Activated T-helper 1 cell treated with anti-CD3 and anti-CD28 coated beads, Interleukin-12 subunit alpha, Interleukin-12 subunit beta, Interleukin-2, Interleukin-4 antibody, amounts not matched to agents 30 ng/mL and 10 ng/mL and 1 ng/mL, durations not matched to agents 14 hours and 24 hours and 36 hours (primary cell): ENCODE measurements at regions of chr5 and their contacts with region 1.

Region 1: DNA sequence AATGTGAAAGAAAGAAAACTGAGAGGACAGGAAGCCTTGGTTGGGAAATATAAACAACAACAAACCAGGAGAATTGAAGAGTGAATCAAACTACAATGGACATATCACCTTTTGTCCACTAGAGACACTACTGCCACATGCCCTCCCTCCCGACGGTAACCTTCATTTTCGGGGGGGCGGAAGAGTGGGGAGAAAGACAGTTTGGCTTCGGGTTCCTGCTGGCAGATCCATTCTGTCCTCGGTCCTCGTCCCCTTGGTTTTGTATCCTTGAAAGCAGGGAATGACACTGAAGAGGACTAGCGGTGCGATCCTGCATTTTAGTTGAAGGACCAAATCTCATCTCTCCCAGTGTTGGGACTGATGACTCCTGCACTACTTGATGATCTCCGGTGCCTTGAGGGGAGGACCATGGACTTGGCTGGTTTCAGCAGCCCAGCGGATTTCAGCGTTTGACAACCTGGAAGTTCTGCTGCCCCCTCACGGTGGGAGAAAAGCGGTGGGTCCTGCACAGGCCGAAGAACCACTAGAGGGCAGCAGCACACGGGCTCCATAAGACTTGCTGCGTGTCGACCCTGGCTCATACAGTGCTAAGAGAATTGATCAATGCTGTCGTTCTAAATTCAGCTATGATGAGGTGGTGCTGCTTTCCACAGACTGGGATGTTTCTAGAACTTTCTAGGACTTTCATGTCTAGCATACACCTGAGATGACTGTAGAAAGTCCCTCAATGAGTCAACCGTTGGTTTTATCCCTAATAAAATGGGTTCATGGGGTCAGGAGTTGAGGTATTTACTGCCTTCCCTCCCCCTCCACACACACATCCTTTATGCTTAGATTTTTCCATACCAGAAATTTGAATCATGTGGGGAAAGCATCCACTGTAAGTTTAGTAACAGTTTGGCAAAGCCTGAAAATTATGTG is 15.1 kb upstream of the ZNF131 start:
- DNase-seq: peak; percentile 83
- H3K4me3 Mint-ChIP-seq: peak overlapping the region; percentile 86
- H3K27ac Mint-ChIP-seq: peak overlapping the region; percentile 89
- H3K4me1 Mint-ChIP-seq: peaks cover 41% of the 10 kb centered on the region
- H3K27me3 Mint-ChIP-seq: no peaks in the 10 kb centered on the region

Region 2: DNA sequence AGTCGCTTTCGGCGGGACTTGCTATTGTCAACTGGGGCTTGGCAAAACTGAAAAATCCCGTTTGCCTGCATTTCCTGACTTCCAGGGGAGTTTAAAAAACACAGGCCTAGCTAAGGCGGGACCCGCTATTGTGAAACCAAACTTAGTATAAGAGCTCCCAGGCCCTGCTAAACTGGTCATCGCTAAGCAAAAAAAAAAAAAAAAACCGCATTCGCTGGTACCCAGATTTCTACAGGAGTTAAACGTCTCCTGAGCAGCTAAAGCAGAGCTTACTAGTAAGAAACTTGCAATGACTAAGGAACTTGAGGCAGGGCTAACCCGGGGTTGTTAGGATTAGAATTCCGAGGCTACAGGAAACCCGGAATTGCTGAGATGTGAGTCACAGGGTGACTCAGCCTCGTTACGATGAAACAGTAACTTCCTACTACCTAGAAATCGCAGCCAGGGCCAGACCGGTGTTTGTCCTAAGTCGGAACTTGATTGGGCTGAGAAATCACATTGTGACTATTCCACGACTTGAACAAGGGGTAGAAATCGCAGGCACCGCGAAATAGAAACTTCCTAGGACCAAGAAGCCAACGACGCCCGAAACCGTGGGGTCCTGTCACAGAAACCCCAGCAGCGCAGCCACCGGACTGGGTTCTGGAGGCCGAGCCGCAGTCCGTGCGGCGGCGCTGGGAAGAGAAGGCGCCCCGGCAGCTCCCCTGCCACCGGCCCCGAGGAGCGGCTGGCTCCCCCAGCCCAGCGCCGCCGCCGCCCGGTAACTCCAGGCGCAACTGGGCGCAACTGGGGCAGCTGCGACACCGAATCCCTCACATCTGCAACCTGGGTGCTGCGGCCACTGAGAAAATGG is 155.0 kb before region 1 on chr5:
- intact Hi-C with region 1: loop called (anchors 2 kb)
- DNase-seq: peak; percentile 60
- H3K4me3 Mint-ChIP-seq: peak overlapping the region; percentile 88
- H3K27ac Mint-ChIP-seq: peak overlapping the region; percentile 97
- H3K4me1 Mint-ChIP-seq: peaks cover 37% of the 10 kb centered on the region
- H3K27me3 Mint-ChIP-seq: peaks cover 8% of the 10 kb centered on the region

Region 3: DNA sequence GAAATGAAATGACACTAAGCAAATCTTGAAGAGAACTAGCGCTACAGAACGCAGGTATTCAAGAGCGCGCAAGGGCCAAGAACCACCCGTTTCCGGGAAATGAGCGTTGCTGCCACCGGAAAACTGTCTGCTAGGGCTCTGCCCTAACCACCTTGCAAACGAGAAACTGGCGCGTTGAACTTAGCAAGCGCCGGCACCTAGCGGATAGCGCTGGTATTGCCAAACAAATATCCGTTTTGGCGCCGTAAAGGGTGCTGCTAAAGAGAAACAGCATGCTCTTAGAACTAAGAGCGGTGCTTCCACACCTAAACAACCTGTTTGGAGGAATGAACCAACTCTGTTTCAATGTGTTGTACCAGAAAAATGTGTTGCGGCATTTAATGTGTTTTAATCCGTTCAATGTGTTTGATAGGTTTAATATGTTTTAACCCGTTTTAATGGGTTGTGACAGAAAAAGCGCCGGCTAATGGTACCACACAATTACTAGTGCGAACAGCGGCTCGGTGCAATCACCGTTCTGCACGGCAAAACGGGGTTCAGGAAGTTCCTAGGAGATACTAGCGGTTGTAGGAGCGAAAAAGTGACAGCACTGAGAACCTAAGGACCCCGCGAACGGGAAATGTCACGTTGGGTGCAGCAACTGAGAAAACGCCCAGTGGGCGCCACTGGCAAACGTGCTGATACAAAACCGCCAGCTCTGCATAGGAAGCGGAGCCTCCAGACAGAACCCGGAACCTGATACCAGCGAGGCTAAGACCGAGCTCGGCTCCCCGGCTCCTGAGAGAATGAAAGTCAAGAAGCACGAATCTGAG is 65.1 kb before region 1 on chr5 and contains the start of gene ANXA2R:
- intact Hi-C with region 1: loop called (anchors 1 kb)
- DNase-seq: peak; percentile 93
- H3K4me3 Mint-ChIP-seq: peak within 1 kb of the TSS; percentile 82
- H3K27ac Mint-ChIP-seq: peak within 1 kb of the TSS; percentile 86
- H3K4me1 Mint-ChIP-seq: peaks cover 59% of the 10 kb centered on the region
- H3K27me3 Mint-ChIP-seq: no peaks in the 10 kb centered on the region
- total RNA-seq, gene ANXA2R: 0.88 and 0.93 TPM in 2 replicates

Region 4: GRCh38 chr5:43191740-43192557 is 86.3 kb after region 1 on chr5 and contains the start of gene NIM1K:
- intact Hi-C with region 1: loop called (anchors 1 kb)
- DNase-seq: peak; percentile 39
- H3K4me3 Mint-ChIP-seq: peak within 1 kb of the TSS; percentile 85
- H3K27ac Mint-ChIP-seq: peak within 1 kb of the TSS; percentile 89
- H3K4me1 Mint-ChIP-seq: peaks cover 40% of the 10 kb centered on the region
- H3K27me3 Mint-ChIP-seq: peaks cover 22% of the 10 kb centered on the region
- total RNA-seq, gene NIM1K: 0.39 and 0.67 TPM in 2 replicates

Region 5: DNA sequence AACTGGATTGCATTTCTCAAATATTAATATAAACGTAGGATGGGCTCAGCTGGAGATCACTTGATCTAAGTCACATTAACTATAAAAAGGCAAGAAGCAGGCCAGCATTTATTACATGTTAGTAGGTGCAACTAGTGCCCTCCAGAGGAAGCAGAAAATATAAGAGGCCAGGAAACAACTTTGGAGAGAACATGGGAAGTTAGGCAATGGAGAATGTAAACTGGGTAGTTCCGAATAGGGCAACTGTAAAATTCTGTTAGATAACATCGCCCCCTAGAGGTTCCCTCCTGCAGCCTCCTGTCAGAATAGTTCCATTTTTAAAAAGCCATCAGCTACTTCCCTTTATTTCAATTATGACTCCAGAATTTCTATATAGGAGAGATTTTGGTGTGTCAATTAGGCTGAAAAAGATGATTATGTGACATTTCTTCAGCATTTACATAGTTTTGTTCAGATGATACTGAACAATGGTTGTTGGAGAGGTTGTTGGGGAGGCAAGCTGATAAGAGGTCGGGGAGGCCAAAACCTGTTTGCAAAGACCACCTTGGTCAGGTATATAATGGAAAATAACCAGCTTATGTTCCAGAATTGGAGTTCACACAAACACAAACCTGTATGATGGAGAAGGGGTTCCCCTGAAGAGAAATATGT is 284.2 kb after region 1 on chr5:
- intact Hi-C with region 1: loop called (anchors 1 kb)
- DNase-seq: peak; percentile 22
- H3K4me3 Mint-ChIP-seq: no peak overlapping the region
- H3K27ac Mint-ChIP-seq: no peak overlapping the region
- H3K4me1 Mint-ChIP-seq: peaks cover 19% of the 10 kb centered on the region
- H3K27me3 Mint-ChIP-seq: no peaks in the 10 kb centered on the region

Region 6: GRCh38 chr5:43556857-43557542 is 451.4 kb after region 1 on chr5 and contains the start of gene PAIP1:
- intact Hi-C with region 1: loop called (anchors 1 kb)
- DNase-seq: peak; percentile 83
- H3K4me3 Mint-ChIP-seq: peak within 1 kb of the TSS; percentile 92
- H3K27ac Mint-ChIP-seq: peak within 1 kb of the TSS; percentile 93
- H3K4me1 Mint-ChIP-seq: peaks cover 10% of the 10 kb centered on the region
- H3K27me3 Mint-ChIP-seq: no peaks in the 10 kb centered on the region
- total RNA-seq, gene PAIP1: 59.0 and 60.8 TPM in 2 replicates

Region 7: DNA sequence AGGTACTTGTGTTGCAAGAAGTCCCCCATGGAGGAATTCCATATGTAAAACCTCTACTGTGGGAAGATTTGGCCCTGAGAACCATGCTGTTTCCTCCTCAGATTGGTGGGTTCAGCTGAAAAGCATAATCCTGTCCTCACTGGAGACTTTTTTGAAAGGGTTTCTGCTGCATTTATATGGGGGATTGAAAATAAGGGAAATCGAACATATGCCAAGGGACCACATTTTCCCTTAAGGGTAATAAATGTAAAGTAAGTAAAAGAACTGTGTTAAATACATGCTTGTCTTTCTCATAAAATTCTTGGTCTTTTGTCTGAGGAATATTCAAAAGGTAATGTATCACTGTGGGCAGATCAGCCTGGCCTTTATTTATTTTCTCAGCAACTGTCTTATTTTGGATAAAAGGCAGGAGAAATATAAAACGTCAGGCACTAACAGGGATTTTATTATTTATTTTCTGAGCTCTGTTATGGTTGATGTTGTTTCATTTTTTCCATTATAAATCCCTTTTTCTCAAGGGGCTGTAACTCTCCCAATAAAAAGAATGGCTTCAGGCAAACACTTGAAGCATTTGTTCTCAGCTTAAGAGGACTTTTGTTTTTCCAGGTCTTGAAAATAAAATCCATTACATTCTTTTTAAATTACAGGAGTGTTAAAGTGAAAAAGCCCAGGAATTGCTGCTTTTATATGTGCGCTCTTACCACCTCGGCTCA is 1152.2 kb after region 1 on chr5:
- intact Hi-C with region 1: no loop called
- DNase-seq: no peak
- H3K4me3 Mint-ChIP-seq: no peak overlapping the region
- H3K27ac Mint-ChIP-seq: no peak overlapping the region
- H3K4me1 Mint-ChIP-seq: no peaks in the 10 kb centered on the region
- H3K27me3 Mint-ChIP-seq: no peaks in the 10 kb centered on the region